ENCODE measurements at regions of chr3 and their contacts with region 1.

Region 1: GRCh38 chr3:196502775-196503195 is 783 bp downstream of the RNF168 start:
- DNase-seq: peak; percentile 78 to 82 (median 80)
- H3K4me3 ChIP-seq: peak overlapping the region; percentile 74 to 95 (median 84)
- H3K4me3 Mint-ChIP-seq: peak overlapping the region; percentile 99
- H3K27ac ChIP-seq: peak overlapping the region; percentile 89 to 99
- H3K27ac Mint-ChIP-seq: peak overlapping the region; percentile 96 to 99 (median 97)
- H3K4me1 ChIP-seq: peaks cover 23 to 32% of the 10 kb centered on the region in 2 donors
- H3K4me1 Mint-ChIP-seq: peaks cover 40% of the 10 kb centered on the region
- H3K27me3 ChIP-seq: no peaks in the 10 kb centered on the region
- H3K27me3 Mint-ChIP-seq: peaks cover 0 to 2% (median 1%) of the 10 kb centered on the region in 3 donors
- CTCF ChIP-seq: no peak

Region 2: GRCh38 chr3:196432137-196432879 is 70.5 kb before region 1 on chr3 and contains the start of gene UBXN7:
- intact Hi-C with region 1: loop called in 1 of 2 experiments (anchors 5 kb)
- DNase-seq: peak; percentile 91 to 94 (median 92)
- H3K4me3 ChIP-seq: peak within 1 kb of the TSS; percentile 92 to 100 (median 99)
- H3K4me3 Mint-ChIP-seq: peak within 1 kb of the TSS; percentile 94 to 98
- H3K27ac ChIP-seq: peak within 1 kb of the TSS; percentile 69 to 93
- H3K27ac Mint-ChIP-seq: peak within 1 kb of the TSS; percentile 76 to 95 (median 88)
- H3K4me1 ChIP-seq: peaks cover 16 to 22% of the 10 kb centered on the region in 2 donors
- H3K4me1 Mint-ChIP-seq: peaks cover 23% of the 10 kb centered on the region
- H3K27me3 ChIP-seq: no peaks in the 10 kb centered on the region
- H3K27me3 Mint-ChIP-seq: peaks cover 0 to 2% (median 1%) of the 10 kb centered on the region in 3 donors
- CTCF ChIP-seq: no peak
- polyA plus RNA-seq, gene UBXN7: 10.5 to 15.8 (median 13.6) TPM